B cell (primary cell): ENCODE measurements at regions of chr1 and their contacts with region 1.

Region 1: GRCh38 chr1:88595355-88596002 is 88.6 kb upstream of the PKN2 start:
- DNase-seq: peak; percentile 39
- ATAC-seq: no peak
- H3K4me3 ChIP-seq: no peak overlapping the region
- H3K4me3 Mint-ChIP-seq: no peak overlapping the region
- H3K27ac ChIP-seq: no peak overlapping the region
- H3K27ac Mint-ChIP-seq: no peak overlapping the region
- H3K4me1 ChIP-seq: no peaks in the 10 kb centered on the region
- H3K4me1 Mint-ChIP-seq: no peaks in the 10 kb centered on the region
- H3K27me3 ChIP-seq: no peaks in the 10 kb centered on the region
- H3K27me3 Mint-ChIP-seq: no peaks in the 10 kb centered on the region
- CTCF ChIP-seq: peak; percentile 68

Region 2: DNA sequence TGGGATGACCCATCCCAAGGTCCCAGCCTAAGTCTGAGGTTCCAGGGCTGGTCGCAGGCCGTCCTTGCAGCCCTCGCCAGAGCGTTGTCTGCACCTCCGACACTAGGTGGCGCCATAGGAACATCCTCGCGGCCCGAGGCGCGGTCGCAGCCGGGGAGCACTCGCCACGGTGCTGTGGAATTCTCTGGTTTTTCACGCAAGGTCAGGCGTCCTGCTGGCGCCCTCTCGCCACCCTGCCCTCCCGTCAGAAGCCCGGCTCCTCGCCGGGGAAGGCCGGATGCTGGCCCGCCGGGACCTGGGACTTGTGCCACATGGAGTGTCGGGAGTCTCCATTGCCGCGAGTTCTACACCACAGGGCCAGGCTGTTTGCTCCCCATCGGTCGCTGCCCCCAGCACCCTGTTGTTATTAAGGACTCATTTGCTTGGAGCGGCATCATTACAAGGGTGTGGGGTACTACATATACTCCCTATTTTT is 1463.6 kb before region 1 on chr1:
- CTCF ChIA-PET with region 1: no interaction called
- POLR2A ChIA-PET with region 1: no interaction called
- intact Hi-C with region 1: loop called (anchors 2 kb)
- DNase-seq: peak; percentile 82
- ATAC-seq: peak; percentile 96
- H3K4me3 ChIP-seq: peak overlapping the region; percentile 13 to 75 (median 63)
- H3K4me3 Mint-ChIP-seq: peak overlapping the region; percentile 94
- H3K27ac ChIP-seq: peak overlapping the region in 1 of 2 donors; percentile 21
- H3K27ac Mint-ChIP-seq: peak overlapping the region; percentile 56
- H3K4me1 ChIP-seq: peaks cover 6 to 11% of the 10 kb centered on the region in 2 donors
- H3K4me1 Mint-ChIP-seq: peaks cover 11% of the 10 kb centered on the region
- H3K27me3 ChIP-seq: peaks cover 0 to 33% (median 5%) of the 10 kb centered on the region in 4 experiments
- H3K27me3 Mint-ChIP-seq: peaks cover 28% of the 10 kb centered on the region
- CTCF ChIP-seq: peak; percentile 98

Region 3: GRCh38 chr1:88579598-88579997 is 15.9 kb before region 1 on chr1:
- CTCF ChIA-PET with region 1: no interaction called
- POLR2A ChIA-PET with region 1: no interaction called
- intact Hi-C with region 1: no loop called
- DNase-seq: no peak
- ATAC-seq: no peak
- H3K4me3 ChIP-seq: no peak overlapping the region
- H3K4me3 Mint-ChIP-seq: no peak overlapping the region
- H3K27ac ChIP-seq: no peak overlapping the region
- H3K27ac Mint-ChIP-seq: no peak overlapping the region
- H3K4me1 ChIP-seq: no peaks in the 10 kb centered on the region
- H3K4me1 Mint-ChIP-seq: no peaks in the 10 kb centered on the region
- H3K27me3 ChIP-seq: peaks cover 0 to 6% (median under 1%) of the 10 kb centered on the region in 4 experiments
- H3K27me3 Mint-ChIP-seq: peaks cover 25% of the 10 kb centered on the region
- CTCF ChIP-seq: no peak